Naive thymus-derived CD4-positive, alpha-beta T cell (primary cell): ENCODE measurements at regions of chr5 and their contacts with region 1.

Region 1: DNA sequence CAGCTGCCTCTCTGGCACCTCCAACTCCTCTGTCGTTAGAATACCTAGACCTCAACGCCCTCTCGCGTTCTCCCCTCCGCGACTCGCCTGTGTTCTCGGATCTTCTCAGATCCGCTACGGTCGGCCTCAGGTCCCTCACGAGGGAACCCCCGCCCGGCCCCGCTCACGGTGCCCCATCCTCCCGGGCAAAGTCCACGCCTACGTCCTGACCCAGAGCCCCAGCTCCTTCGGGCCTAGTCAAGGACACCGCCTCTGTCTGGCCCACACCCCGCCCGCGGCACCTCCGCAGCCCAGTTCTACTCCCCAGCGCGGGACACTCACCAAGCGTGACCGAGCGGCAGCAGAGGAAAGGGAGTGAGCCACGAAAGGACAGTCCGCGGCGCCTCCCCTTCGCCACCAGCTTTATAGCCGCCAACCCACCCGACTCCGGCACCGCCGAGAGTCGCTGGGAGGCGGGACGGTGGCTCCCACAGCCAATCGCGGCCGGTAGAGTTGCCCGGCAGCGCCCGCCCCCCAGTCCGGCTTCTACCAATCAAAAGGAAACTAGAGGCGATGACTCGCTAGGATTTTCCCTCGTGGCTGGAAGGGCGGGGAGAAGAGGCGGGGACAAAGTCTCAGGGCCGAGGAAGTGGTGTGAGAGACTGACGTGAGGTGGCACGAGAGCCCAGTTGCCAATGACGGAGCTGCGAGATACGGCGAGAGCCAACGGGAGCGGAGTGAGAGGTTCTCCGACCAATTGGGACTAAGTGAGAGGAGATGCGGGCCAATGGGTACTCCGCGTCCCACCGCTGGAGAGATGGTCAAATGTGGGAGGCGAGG is at the start of gene HMGCS1:
- DNase-seq: peak; percentile 94 to 99 (median 99)
- ATAC-seq: peak; percentile 93
- H3K4me3 ChIP-seq: peak within 1 kb of the TSS; percentile 89
- H3K4me3 Mint-ChIP-seq: peak within 1 kb of the TSS; percentile 82 to 99 (median 94)
- H3K27ac ChIP-seq: peak within 1 kb of the TSS; percentile 95
- H3K27ac Mint-ChIP-seq: peak within 1 kb of the TSS; percentile 81 to 98 (median 94)
- H3K4me1 ChIP-seq: peaks cover 9 to 12% of the 10 kb centered on the region in 2 donors
- H3K4me1 Mint-ChIP-seq: peaks cover 19 to 63% (median 39%) of the 10 kb centered on the region in 7 donors
- H3K27me3 ChIP-seq: no peaks in the 10 kb centered on the region
- H3K27me3 Mint-ChIP-seq: peaks cover 0 to 2% (median 0%) of the 10 kb centered on the region in 5 donors
- total RNA-seq, gene HMGCS1: 32.2 to 77.5 (median 48.2) TPM

Region 2: DNA sequence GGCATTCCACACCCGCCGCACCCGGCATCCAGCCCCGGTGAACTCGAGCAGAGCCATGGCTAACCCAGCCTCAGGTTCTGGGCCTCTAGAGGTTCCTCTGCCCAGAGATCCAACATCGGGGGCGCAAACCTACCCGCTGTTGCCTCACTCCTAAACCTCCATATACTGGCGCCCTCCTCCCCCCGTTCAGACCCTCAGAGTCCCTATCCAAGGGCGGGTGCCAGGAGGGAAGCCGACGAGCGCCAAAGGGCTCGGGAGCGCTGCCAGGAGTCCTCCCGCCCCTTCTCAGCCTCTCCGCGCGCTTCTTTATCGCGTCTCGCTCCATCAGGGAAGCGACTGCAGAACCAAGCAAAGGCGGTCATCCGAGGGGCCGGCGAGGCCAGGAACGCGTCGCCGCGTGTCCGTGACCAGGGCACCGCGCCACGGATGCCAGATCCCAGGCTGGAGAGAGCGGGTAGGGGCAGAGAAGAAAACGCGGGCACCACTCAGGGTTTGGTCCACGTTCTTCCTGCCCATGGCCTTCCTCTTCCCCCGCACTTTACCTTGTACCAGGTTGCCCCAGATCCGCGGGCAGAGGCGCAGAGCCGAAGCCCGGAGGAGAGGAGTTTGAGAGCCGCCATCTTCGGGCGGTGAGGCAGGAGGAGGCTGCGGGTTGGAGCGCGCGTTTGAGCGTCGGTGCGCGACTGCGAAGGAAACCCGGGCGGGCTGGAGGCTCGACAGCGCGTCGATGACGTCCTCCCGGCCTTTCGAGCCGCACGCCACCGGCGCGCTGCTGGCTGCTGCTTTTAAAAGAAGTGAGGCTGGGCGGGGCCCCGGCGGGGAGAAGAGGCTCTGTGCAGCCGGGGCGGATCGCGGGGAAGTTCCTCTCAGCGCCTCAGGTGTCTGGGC is 1443.3 kb before region 1 on chr5 and contains the start of gene OXCT1:
- CTCF ChIA-PET with region 1: no interaction called
- POLR2A ChIA-PET with region 1: interaction called, 5 read pairs
- intact Hi-C with region 1: loop called (anchors 1 to 2 kb)
- DNase-seq: peak; percentile 88 to 96 (median 95)
- ATAC-seq: peak; percentile 97
- H3K4me3 ChIP-seq: peak within 1 kb of the TSS; percentile 91
- H3K4me3 Mint-ChIP-seq: peak within 1 kb of the TSS; percentile 85 to 94 (median 90)
- H3K27ac ChIP-seq: peak within 1 kb of the TSS; percentile 97
- H3K27ac Mint-ChIP-seq: peak within 1 kb of the TSS; percentile 89 to 98 (median 97)
- H3K4me1 ChIP-seq: peaks cover 16% of the 10 kb centered on the region in 2 donors
- H3K4me1 Mint-ChIP-seq: peaks cover 18 to 63% (median 57%) of the 10 kb centered on the region in 7 donors
- H3K27me3 ChIP-seq: no peaks in the 10 kb centered on the region
- H3K27me3 Mint-ChIP-seq: no peaks in the 10 kb centered on the region
- total RNA-seq, gene OXCT1: 18.6 to 53.1 (median 30.0) TPM

Region 3: DNA sequence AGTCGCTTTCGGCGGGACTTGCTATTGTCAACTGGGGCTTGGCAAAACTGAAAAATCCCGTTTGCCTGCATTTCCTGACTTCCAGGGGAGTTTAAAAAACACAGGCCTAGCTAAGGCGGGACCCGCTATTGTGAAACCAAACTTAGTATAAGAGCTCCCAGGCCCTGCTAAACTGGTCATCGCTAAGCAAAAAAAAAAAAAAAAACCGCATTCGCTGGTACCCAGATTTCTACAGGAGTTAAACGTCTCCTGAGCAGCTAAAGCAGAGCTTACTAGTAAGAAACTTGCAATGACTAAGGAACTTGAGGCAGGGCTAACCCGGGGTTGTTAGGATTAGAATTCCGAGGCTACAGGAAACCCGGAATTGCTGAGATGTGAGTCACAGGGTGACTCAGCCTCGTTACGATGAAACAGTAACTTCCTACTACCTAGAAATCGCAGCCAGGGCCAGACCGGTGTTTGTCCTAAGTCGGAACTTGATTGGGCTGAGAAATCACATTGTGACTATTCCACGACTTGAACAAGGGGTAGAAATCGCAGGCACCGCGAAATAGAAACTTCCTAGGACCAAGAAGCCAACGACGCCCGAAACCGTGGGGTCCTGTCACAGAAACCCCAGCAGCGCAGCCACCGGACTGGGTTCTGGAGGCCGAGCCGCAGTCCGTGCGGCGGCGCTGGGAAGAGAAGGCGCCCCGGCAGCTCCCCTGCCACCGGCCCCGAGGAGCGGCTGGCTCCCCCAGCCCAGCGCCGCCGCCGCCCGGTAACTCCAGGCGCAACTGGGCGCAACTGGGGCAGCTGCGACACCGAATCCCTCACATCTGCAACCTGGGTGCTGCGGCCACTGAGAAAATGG is 362.6 kb before region 1 on chr5:
- CTCF ChIA-PET with region 1: interaction called, 3 read pairs
- POLR2A ChIA-PET with region 1: interaction called, 8 read pairs
- intact Hi-C with region 1: loop called (anchors 1 to 2 kb)
- DNase-seq: peak in 8 of 9 donors; percentile 39 to 77 (median 51)
- ATAC-seq: peak; percentile 51
- H3K4me3 ChIP-seq: peak overlapping the region; percentile 80
- H3K4me3 Mint-ChIP-seq: peak overlapping the region; percentile 87 to 99 (median 97)
- H3K27ac ChIP-seq: peak overlapping the region; percentile 98
- H3K27ac Mint-ChIP-seq: peak overlapping the region; percentile 97 to 100 (median 99)
- H3K4me1 ChIP-seq: peaks cover 5 to 22% of the 10 kb centered on the region in 2 donors
- H3K4me1 Mint-ChIP-seq: peaks cover 13 to 51% (median 23%) of the 10 kb centered on the region in 7 donors
- H3K27me3 ChIP-seq: no peaks in the 10 kb centered on the region
- H3K27me3 Mint-ChIP-seq: peaks cover 0 to 9% (median 0%) of the 10 kb centered on the region in 5 donors

Region 4: DNA sequence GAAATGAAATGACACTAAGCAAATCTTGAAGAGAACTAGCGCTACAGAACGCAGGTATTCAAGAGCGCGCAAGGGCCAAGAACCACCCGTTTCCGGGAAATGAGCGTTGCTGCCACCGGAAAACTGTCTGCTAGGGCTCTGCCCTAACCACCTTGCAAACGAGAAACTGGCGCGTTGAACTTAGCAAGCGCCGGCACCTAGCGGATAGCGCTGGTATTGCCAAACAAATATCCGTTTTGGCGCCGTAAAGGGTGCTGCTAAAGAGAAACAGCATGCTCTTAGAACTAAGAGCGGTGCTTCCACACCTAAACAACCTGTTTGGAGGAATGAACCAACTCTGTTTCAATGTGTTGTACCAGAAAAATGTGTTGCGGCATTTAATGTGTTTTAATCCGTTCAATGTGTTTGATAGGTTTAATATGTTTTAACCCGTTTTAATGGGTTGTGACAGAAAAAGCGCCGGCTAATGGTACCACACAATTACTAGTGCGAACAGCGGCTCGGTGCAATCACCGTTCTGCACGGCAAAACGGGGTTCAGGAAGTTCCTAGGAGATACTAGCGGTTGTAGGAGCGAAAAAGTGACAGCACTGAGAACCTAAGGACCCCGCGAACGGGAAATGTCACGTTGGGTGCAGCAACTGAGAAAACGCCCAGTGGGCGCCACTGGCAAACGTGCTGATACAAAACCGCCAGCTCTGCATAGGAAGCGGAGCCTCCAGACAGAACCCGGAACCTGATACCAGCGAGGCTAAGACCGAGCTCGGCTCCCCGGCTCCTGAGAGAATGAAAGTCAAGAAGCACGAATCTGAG is 272.8 kb before region 1 on chr5 and contains the start of gene ANXA2R:
- CTCF ChIA-PET with region 1: interaction called, 6 read pairs
- POLR2A ChIA-PET with region 1: interaction called, 13 read pairs
- intact Hi-C with region 1: loop called (anchors 1 kb)
- DNase-seq: peak; percentile 76 to 98 (median 96)
- ATAC-seq: peak; percentile 72
- H3K4me3 ChIP-seq: peak within 1 kb of the TSS; percentile 73
- H3K4me3 Mint-ChIP-seq: peak within 1 kb of the TSS; percentile 82 to 99 (median 98)
- H3K27ac ChIP-seq: peak within 1 kb of the TSS; percentile 96
- H3K27ac Mint-ChIP-seq: peak within 1 kb of the TSS; percentile 93 to 100 (median 99)
- H3K4me1 ChIP-seq: peaks cover 17 to 31% of the 10 kb centered on the region in 2 donors
- H3K4me1 Mint-ChIP-seq: peaks cover 14 to 75% (median 45%) of the 10 kb centered on the region in 7 donors
- H3K27me3 ChIP-seq: no peaks in the 10 kb centered on the region
- H3K27me3 Mint-ChIP-seq: no peaks in the 10 kb centered on the region
- total RNA-seq, gene ANXA2R: 13.2 to 61.4 (median 42.0) TPM

Region 5: DNA sequence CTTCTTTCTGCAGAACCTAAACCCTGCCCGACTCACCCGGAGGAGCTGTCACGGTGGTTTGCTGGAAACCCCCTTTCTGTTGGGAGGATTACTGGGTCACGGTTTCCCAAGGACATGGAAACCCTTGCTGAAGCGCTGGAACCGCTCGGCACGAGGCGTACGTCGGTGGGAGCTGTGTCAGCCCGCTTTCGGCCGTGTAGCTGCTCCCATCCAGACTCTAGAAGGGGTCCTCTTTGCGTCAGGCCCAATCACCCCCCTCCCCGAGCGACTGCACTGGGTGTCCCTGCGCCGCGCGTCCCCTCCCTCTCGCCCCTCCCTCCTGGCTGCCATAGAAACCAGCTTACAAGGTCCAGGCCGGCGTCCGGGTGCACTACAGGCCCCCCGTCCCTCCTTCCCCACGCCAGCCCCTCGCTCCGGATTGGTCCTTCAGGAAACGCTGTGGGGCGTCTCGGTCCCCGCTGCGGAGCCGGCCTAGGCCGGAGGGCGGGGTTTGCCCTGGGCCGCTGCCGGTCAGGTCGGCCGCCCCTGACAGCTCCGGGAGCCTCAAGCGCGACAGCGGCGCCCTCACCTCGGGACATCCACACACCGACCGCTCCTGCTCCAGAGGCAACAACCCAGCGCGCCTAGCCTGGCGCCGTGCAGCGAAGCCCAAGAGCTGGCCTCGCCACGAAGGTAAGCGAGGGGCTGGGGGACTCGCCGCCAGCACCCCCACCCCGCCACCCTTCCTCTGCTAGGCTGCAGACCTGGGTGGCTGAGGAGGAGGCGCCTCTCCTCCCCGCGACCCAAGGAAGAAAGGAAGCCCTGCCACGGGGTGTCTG is 121.3 kb before region 1 on chr5 and contains the start of gene NIM1K:
- CTCF ChIA-PET with region 1: no interaction called
- POLR2A ChIA-PET with region 1: no interaction called
- intact Hi-C with region 1: loop called in 1 of 2 experiments (anchors 10 kb)
- DNase-seq: peak in 8 of 9 donors; percentile 7 to 55 (median 16)
- ATAC-seq: peak; percentile 51
- H3K4me3 ChIP-seq: peak within 1 kb of the TSS; percentile 63
- H3K4me3 Mint-ChIP-seq: peak within 1 kb of the TSS; percentile 81 to 94 (median 88)
- H3K27ac ChIP-seq: no peak within 1 kb of the TSS
- H3K27ac Mint-ChIP-seq: peak within 1 kb of the TSS in 6 of 9 donors; percentile 21 to 86 (median 71)
- H3K4me1 ChIP-seq: peaks cover 4 to 18% of the 10 kb centered on the region in 2 donors
- H3K4me1 Mint-ChIP-seq: peaks cover 11 to 33% (median 23%) of the 10 kb centered on the region in 7 donors
- H3K27me3 ChIP-seq: peaks cover 0 to 5% of the 10 kb centered on the region in 2 donors
- H3K27me3 Mint-ChIP-seq: peaks cover 15 to 22% (median 19%) of the 10 kb centered on the region in 5 donors
- total RNA-seq, gene NIM1K: 0.40 to 0.97 (median 0.61) TPM

Region 6: DNA sequence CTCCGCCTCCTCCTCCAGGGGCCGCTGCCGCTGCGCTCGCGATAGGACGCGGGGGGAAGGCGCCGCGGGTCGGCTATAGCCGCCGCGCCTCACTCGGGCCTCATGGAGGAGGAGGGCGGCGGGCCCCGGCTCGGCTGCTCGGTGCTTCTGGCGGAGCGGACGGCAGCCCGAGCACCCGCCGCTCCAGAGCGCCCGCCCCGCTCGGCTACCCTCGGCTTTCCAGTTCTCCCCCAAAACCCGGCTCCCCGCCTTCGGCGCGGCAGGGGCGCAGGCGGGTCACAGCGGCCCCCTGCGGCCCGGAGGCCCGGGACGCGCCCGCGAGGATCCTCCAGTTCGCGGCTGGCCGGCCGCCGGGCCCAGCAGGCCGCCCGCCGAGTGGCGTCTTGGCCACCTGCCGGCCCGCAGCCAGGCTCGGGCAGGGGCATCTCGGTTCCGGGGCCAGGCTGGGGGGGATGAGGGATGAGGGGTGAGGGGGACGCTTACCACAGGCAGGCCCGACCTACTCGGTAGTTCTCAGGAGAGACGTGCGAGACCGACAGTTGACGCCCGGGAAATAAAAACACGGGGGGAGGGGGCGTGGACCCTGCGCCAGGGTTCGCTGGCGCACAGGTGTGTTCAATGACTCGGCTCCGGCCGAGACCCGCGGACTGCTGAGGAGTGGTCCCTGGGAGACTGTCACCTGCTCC is 243.8 kb after region 1 on chr5 and contains the start of gene PAIP1:
- CTCF ChIA-PET with region 1: no interaction called
- POLR2A ChIA-PET with region 1: interaction called, 3 read pairs
- intact Hi-C with region 1: loop called (anchors 1 kb)
- DNase-seq: peak; percentile 80 to 89 (median 87)
- ATAC-seq: peak; percentile 89
- H3K4me3 ChIP-seq: peak within 1 kb of the TSS; percentile 79
- H3K4me3 Mint-ChIP-seq: peak within 1 kb of the TSS in 7 of 10 donors; percentile 88 to 97 (median 95)
- H3K27ac ChIP-seq: peak within 1 kb of the TSS; percentile 96
- H3K27ac Mint-ChIP-seq: peak within 1 kb of the TSS; percentile 91 to 99 (median 98)
- H3K4me1 ChIP-seq: peaks cover 17 to 30% of the 10 kb centered on the region in 2 donors
- H3K4me1 Mint-ChIP-seq: peaks cover 6 to 17% (median 7%) of the 10 kb centered on the region in 7 donors
- H3K27me3 ChIP-seq: no peaks in the 10 kb centered on the region
- H3K27me3 Mint-ChIP-seq: peaks cover 0 to 18% (median 5%) of the 10 kb centered on the region in 5 donors
- total RNA-seq, gene PAIP1: 20.7 to 41.7 (median 39.2) TPM

Region 7: DNA sequence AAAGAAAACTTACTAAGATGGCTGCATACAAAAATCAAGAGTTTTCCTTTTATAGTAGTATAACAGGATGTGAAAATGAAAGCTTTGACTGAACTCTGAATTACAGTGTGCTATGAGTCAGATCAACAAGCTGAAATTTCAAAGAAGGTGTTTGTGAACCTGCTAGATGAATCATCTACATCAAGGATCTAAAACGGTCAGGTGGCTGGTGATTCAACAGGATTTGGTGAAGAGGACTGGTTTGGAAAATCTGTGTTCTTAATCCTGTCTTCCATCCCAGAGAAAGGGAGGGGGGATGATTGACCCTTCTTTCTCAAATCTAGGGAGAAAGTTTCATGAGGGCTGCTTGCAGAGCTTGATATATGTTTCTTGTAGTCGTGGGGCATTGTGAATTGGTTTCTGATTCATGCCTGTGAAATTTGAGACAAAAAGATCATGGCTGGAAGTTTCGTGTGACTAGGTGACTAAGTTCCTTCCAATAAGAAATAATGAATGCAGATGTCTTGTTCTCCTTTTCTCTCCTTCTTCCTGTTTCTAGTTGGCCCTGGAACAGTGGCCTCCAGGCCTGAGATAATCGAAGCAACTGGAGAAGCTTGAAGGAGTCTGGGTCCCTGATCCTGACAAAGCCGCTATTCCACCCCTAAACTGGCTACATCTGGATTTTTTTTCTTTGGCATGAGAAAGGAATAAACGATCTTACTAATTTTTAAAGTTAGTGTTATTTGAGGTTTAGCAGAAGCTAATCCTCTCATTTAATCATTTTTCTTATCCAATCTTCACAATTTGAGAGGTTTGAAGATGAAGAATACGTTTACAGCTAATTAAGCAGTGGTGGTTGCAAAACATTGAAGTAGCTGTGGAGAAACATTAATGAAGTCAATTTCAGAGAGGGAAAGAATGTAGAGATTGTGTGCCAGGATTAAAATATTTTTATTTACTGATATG is 1562.7 kb after region 1 on chr5:
- CTCF ChIA-PET with region 1: no interaction called
- POLR2A ChIA-PET with region 1: no interaction called
- intact Hi-C with region 1: no loop called
- DNase-seq: peak in 5 of 9 donors; percentile 3 to 22 (median 11)
- ATAC-seq: peak; percentile 63
- H3K4me3 ChIP-seq: no peak overlapping the region
- H3K4me3 Mint-ChIP-seq: peak overlapping the region in 7 of 10 donors; percentile 12 to 69 (median 45)
- H3K27ac ChIP-seq: no peak overlapping the region
- H3K27ac Mint-ChIP-seq: peak overlapping the region; percentile 21 to 95 (median 62)
- H3K4me1 ChIP-seq: no peaks in the 10 kb centered on the region
- H3K4me1 Mint-ChIP-seq: peaks cover 0 to 23% (median 14%) of the 10 kb centered on the region in 7 donors
- H3K27me3 ChIP-seq: no peaks in the 10 kb centered on the region
- H3K27me3 Mint-ChIP-seq: no peaks in the 10 kb centered on the region